Activated naive CD4-positive, alpha-beta T cell treated with anti-CD3 and anti-CD28 coated beads for 36 hours (primary cell): ENCODE measurements at regions of chr6 and their contacts with region 1.

Region 1: GRCh38 chr6:115287467-115287866 is 773.2 kb downstream of the FRK start:
- DNase-seq: no peak
- H3K4me3 Mint-ChIP-seq: no peak overlapping the region
- H3K27ac Mint-ChIP-seq: no peak overlapping the region
- H3K4me1 Mint-ChIP-seq: no peaks in the 10 kb centered on the region
- H3K27me3 Mint-ChIP-seq: no peaks in the 10 kb centered on the region

Region 2: DNA sequence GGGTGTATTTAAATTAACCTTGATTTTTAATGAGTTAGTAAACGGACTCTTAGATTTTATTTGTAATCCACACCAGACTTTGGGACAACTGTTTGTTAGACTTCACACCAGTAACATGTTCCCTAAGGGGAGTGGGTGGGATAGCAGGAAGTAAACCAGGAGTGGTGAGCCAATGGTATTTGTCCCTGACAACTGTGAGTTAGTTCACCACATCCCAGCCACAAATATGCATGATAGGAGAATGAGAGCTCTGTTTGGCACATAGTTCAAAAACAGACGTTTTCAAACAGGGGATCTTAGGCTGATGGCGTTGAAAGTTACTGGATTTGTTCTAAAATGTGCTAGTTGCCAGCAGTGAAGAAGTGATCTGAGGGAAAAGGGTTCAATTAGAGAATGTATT is 857.1 kb after region 1 on chr6:
- CTCF ChIA-PET with region 1: no interaction called
- intact Hi-C with region 1: loop called (anchors 10 kb)
- DNase-seq: no peak
- H3K4me3 Mint-ChIP-seq: no peak overlapping the region
- H3K27ac Mint-ChIP-seq: no peak overlapping the region
- H3K4me1 Mint-ChIP-seq: no peaks in the 10 kb centered on the region
- H3K27me3 Mint-ChIP-seq: no peaks in the 10 kb centered on the region